ENCODE measurements at regions of chr4 and their contacts with region 1.

Region 1: DNA sequence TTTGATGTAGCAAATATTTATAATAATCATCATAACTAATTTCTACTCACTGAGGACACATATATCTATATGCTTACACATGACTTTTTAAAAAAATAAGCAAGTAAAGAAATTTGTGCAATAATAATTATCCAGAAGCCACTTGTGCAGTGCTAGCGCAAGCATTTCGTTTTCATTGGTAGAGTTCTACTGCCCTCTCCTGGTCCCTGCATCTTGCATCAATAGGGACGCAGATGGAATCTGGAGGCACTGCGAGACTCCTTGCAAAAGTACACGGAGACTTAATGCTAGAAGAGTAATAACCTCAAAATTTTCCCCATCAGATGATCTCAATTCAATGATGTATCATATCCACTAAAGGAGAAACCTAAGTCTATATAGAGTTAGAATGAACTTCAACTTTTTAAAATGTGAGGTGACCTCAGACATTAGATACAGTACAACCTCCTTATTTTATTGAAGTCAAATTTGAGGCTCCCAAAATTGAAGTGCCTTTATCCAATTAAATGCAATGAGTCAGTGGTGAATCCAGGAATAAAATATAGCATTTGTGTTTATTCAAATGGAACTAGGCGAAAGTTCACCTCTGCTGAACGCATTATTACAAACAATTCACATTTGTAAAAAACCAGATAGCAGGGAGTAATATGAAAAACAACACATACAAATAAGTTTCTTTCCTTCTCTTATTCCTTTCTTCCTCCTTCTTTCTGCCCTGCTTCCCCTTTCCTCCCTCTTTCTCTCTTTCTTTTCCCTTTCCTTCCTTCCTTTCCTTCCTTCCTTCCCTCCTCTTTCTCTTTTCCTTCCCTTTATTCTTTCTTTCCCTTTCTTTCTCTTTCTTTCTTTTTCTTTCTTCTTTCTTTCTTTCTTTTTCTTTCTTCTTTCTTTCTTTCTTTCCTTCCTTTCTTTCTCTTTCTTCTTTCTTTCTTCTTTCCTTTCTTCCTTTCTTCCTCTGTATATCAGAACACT is 450.0 kb downstream of the ANKRD50 start:
- DNase-seq: peak in 1 of 2 donors; percentile 61
- ATAC-seq: peak; percentile 89
- H3K4me3 ChIP-seq: no peak overlapping the region
- H3K27ac ChIP-seq: no peak overlapping the region
- H3K4me1 ChIP-seq: no peaks in the 10 kb centered on the region
- H3K27me3 ChIP-seq: no peaks in the 10 kb centered on the region

Region 2: GRCh38 chr4:122732329-122733026 is 1530.0 kb before region 1 on chr4 and contains the start of gene BBS12:
- intact Hi-C with region 1: loop called in 1 of 2 experiments (anchors 10 kb)
- DNase-seq: peak; percentile 99
- ATAC-seq: peak; percentile 100
- H3K4me3 ChIP-seq: peak within 1 kb of the TSS; percentile 71 to 84
- H3K27ac ChIP-seq: peak within 1 kb of the TSS; percentile 69 to 74
- H3K4me1 ChIP-seq: no peaks in the 10 kb centered on the region
- H3K27me3 ChIP-seq: no peaks in the 10 kb centered on the region
- total RNA-seq, gene BBS12: 3.2 to 3.8 TPM

Region 3: GRCh38 chr4:123102897-123103471 is 1159.5 kb before region 1 on chr4:
- intact Hi-C with region 1: loop called (anchors 5 kb)
- DNase-seq: no peak
- ATAC-seq: peak; percentile 74
- H3K4me3 ChIP-seq: no peak overlapping the region
- H3K27ac ChIP-seq: no peak overlapping the region
- H3K4me1 ChIP-seq: no peaks in the 10 kb centered on the region
- H3K27me3 ChIP-seq: no peaks in the 10 kb centered on the region

Region 4: DNA sequence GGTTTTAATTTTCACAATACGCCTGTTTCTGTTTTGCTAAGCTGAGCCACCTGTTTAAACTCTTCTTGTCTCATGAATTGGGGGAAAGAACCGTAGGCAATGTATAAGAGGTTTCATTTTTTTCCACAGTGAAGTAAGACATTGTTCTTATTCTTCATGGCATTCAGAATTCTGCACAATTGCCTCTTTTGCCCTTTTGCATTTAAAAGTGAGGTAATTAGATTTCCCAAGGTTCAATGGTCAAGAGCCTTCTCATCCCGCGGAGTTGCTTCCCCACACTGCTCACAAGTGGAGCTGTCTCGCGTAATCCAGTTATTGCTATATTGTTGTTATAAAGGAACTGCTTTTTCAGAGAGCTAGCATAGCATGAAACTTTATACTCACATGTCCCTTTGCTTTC is 956.8 kb before region 1 on chr4:
- intact Hi-C with region 1: no loop called
- DNase-seq: no peak
- ATAC-seq: no peak
- H3K4me3 ChIP-seq: no peak overlapping the region
- H3K27ac ChIP-seq: no peak overlapping the region
- H3K4me1 ChIP-seq: peaks cover 0 to 4% of the 10 kb centered on the region in 2 donors
- H3K27me3 ChIP-seq: no peaks in the 10 kb centered on the region

Region 5: GRCh38 chr4:123767806-123768205 is 494.7 kb before region 1 on chr4:
- intact Hi-C with region 1: loop called (anchors 2 to 5 kb)
- DNase-seq: no peak
- ATAC-seq: no peak
- H3K4me3 ChIP-seq: no peak overlapping the region
- H3K27ac ChIP-seq: no peak overlapping the region
- H3K4me1 ChIP-seq: no peaks in the 10 kb centered on the region
- H3K27me3 ChIP-seq: no peaks in the 10 kb centered on the region

Region 6: GRCh38 chr4:123776254-123776653 is 486.2 kb before region 1 on chr4:
- intact Hi-C with region 1: loop called (anchors 2 to 5 kb)
- DNase-seq: no peak
- ATAC-seq: no peak
- H3K4me3 ChIP-seq: no peak overlapping the region
- H3K27ac ChIP-seq: no peak overlapping the region
- H3K4me1 ChIP-seq: no peaks in the 10 kb centered on the region
- H3K27me3 ChIP-seq: no peaks in the 10 kb centered on the region

Region 7: DNA sequence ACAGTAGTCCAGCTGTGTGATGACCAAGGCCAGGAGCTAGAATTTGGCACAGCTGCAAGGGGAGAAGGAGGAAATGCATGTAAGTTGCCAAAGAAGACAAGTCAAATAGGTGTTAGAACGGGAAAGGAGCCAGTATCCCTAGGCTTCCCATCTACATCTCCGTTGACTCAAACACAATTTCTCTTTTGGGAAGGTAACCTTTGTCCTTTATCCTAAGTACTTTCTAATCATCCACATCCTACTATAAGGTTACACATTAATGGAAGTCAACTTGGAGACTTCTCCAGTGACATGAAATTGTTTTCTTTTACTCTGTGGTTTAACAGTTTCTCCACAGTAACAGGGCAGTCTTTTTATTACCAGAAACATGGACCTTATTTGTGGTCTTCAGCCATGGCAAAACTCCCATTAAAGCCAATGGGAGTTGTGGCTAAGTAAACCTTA is 169.9 kb before region 1 on chr4:
- intact Hi-C with region 1: no loop called
- DNase-seq: no peak
- ATAC-seq: no peak
- H3K4me3 ChIP-seq: no peak overlapping the region
- H3K27ac ChIP-seq: no peak overlapping the region
- H3K4me1 ChIP-seq: peaks cover 0 to 2% of the 10 kb centered on the region in 2 donors
- H3K27me3 ChIP-seq: no peaks in the 10 kb centered on the region

Region 8: GRCh38 chr4:124111922-124112321 is 150.6 kb before region 1 on chr4:
- intact Hi-C with region 1: loop called in 1 of 2 experiments (anchors 5 kb)
- DNase-seq: no peak
- ATAC-seq: peak; percentile 81
- H3K4me3 ChIP-seq: no peak overlapping the region
- H3K27ac ChIP-seq: no peak overlapping the region
- H3K4me1 ChIP-seq: no peaks in the 10 kb centered on the region
- H3K27me3 ChIP-seq: no peaks in the 10 kb centered on the region

Region 9: DNA sequence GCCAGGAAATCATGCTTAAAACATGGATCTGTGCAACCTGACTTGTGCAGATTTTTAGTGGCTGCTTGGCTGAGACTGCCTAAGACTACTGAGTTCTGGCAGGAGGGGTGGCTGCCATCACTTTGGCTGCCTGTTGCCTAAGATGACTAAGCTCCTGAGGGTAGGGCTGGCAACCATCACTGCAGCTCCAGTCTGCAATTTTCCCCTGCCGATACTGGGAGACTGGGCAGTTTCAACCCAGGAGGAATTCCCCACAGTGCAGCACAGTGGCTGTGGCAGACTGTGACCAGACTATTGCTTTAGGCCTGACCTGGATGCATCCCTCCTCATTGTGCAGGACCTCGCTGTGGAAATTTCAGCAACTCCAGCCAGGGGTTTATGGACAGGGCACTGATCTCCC is 94.9 kb before region 1 on chr4:
- intact Hi-C with region 1: no loop called
- DNase-seq: peak; percentile 57 to 75
- ATAC-seq: peak; percentile 66
- H3K4me3 ChIP-seq: no peak overlapping the region
- H3K27ac ChIP-seq: no peak overlapping the region
- H3K4me1 ChIP-seq: no peaks in the 10 kb centered on the region
- H3K27me3 ChIP-seq: no peaks in the 10 kb centered on the region

Measured in aorta (tissue), 5 donors.